A549 (cell line): ENCODE measurements at regions of chr19 and their contacts with region 1.

Region 1: GRCh38 chr19:39970675-39971379 is at the start of gene PSMC4:
- DNase-seq: peak; percentile 100
- ATAC-seq: peak; percentile 97 to 99
- H3K4me3 ChIP-seq: peak within 1 kb of the TSS; percentile 70
- H3K27ac ChIP-seq: peak within 1 kb of the TSS; percentile 91
- H3K4me1 ChIP-seq: peaks cover 18% of the 10 kb centered on the region
- CTCF ChIP-seq: peak; percentile 99
- EP300 ChIP-seq: no peak
- POLR2A ChIP-seq: peak; percentile 81
- RAD21 ChIP-seq: peak; percentile 99 to 100
- polyA plus RNA-seq, gene PSMC4: 192 and 208 TPM in 2 replicates

Region 2: GRCh38 chr19:39435499-39436349 is 535.1 kb before region 1 on chr19 and contains the start of gene RPS16:
- CTCF ChIA-PET with region 1: no interaction called
- POLR2A ChIA-PET with region 1: interaction called, 10 read pairs
- DNase-seq: peak; percentile 95 to 100
- ATAC-seq: peak; percentile 80 to 88
- H3K4me3 ChIP-seq: peak within 1 kb of the TSS; percentile 80
- H3K27ac ChIP-seq: peak within 1 kb of the TSS; percentile 90 to 95
- H3K4me1 ChIP-seq: peaks cover 71% of the 10 kb centered on the region
- CTCF ChIP-seq: no peak
- EP300 ChIP-seq: no peak
- POLR2A ChIP-seq: peak; percentile 92
- RAD21 ChIP-seq: no peak
- polyA plus RNA-seq, gene RPS16: 4,855 and 5,722 TPM in 2 replicates

Region 3: DNA sequence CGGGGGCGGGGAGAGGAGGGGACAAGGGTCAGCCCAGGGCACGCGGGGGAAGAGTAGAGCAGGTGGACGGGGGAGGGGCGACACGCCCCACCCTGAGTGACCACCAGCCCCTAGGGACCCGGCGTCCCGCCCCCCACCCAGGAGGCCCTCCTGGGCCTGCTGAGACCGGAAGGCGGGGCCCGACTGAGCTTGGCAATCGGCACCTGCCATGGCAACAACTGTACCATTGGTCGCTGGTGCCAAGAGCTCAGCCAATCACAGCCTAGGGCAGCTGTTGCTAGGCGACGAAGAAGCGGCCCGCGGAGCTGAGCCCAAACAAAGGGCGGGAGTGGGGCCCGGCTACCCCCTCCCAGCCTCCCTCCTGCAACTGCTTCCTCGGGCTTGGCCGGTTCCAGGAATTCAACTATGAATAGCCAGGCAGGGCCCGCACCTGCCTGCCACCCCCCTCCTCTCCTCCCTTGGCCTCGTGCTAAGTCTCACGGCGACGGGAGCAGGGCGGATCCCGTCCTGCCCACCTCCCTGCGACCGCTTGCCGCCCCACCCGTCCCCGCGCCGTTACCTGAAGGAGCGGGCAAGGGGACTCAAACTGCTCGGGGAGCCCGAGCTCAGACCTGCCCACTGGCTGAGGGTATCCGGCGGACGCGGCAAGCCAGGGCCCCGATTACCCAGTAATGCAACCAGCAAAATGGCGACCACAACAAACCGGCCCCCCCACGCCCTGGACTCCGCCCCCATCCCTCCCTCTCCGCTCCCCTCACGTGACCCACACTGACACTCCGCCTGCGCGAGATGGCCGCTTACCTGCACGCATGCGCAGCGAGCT is 137.2 kb before region 1 on chr19 and contains the start of gene DYRK1B:
- CTCF ChIA-PET with region 1: interaction called, 13 read pairs
- POLR2A ChIA-PET with region 1: interaction called, 31 read pairs
- DNase-seq: peak; percentile 100
- ATAC-seq: peak; percentile 90 to 95
- H3K4me3 ChIP-seq: peak within 1 kb of the TSS; percentile 73
- H3K27ac ChIP-seq: peak within 1 kb of the TSS; percentile 81 to 87
- H3K4me1 ChIP-seq: peaks cover 17% of the 10 kb centered on the region
- CTCF ChIP-seq: no peak
- EP300 ChIP-seq: no peak; a peak in 1 of 5 replicates
- POLR2A ChIP-seq: peak; percentile 40
- RAD21 ChIP-seq: no peak
- polyA plus RNA-seq, gene DYRK1B: 13.8 and 17.3 TPM in 2 replicates

Region 4: GRCh38 chr19:39889872-39890545 is 80.8 kb before region 1 on chr19:
- CTCF ChIA-PET with region 1: interaction called, 33 read pairs
- POLR2A ChIA-PET with region 1: no interaction called
- DNase-seq: no peak
- ATAC-seq: no peak
- H3K4me3 ChIP-seq: no peak overlapping the region
- H3K27ac ChIP-seq: no peak overlapping the region
- H3K4me1 ChIP-seq: peaks cover 4% of the 10 kb centered on the region
- CTCF ChIP-seq: no peak
- EP300 ChIP-seq: no peak
- POLR2A ChIP-seq: no peak
- RAD21 ChIP-seq: no peak

Region 5: GRCh38 chr19:39934584-39935363 is 36.1 kb before region 1 on chr19 and contains the start of gene FCGBP:
- CTCF ChIA-PET with region 1: interaction called, 22 read pairs
- POLR2A ChIA-PET with region 1: interaction called, 5 read pairs
- DNase-seq: no peak
- ATAC-seq: peak; percentile 12 to 15; a peak in 4 of 6 replicates
- H3K4me3 ChIP-seq: no peak within 1 kb of the TSS
- H3K27ac ChIP-seq: peak within 1 kb of the TSS; percentile 59 to 76
- H3K4me1 ChIP-seq: peaks cover 41% of the 10 kb centered on the region
- CTCF ChIP-seq: no peak
- EP300 ChIP-seq: no peak
- POLR2A ChIP-seq: no peak
- RAD21 ChIP-seq: no peak
- polyA plus RNA-seq, gene FCGBP: 1.4 and 2.8 TPM in 2 replicates

Region 6: DNA sequence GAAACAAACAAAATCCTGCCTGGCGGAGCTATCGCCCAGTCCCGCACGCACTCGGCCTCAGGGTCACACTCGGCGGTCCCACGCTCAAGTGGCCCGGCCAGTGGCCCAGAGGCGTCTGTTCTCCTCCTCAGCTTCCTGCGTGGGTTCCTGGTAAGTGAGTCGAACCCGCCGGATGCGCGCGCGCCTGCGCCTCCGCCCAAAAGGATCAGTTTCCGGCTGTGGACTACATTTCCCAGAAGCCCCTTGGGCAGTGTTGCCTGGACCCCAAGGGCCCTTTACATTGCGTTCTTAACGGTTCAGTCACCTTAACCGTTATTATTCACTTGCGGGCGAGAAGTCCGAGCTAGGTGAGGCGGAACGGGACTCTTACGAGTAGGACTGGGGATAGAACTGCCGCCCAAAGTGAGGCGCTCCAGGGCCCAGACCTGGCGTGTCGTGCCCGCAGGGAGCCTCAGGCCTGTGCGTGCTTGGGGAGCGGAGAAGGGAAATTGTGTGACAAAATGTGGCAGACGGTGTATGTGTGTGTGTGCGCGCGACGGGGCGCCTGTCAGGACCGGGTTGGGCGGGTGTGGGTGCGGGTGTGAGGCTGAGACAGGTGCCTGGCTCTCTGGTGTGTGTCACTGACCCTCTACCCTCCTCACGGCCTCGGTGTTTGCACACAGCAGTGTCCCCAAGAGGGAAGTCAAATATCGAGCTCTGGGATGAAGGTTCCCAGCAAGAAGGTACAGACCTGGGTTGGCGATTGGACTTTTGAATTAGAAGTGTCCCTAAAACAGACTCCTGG is 26.2 kb after region 1 on chr19 and contains the start of gene ZNF546:
- CTCF ChIA-PET with region 1: interaction called, 15 read pairs
- POLR2A ChIA-PET with region 1: interaction called, 24 read pairs
- DNase-seq: peak; percentile 96 to 100
- ATAC-seq: peak; percentile 96 to 98
- H3K4me3 ChIP-seq: peak within 1 kb of the TSS; percentile 74
- H3K27ac ChIP-seq: peak within 1 kb of the TSS; percentile 89 to 90
- H3K4me1 ChIP-seq: peaks cover 11% of the 10 kb centered on the region; the same call in 2 of the 3 replicates
- CTCF ChIP-seq: no peak
- EP300 ChIP-seq: peak in 1 of 2 experiments; percentile 9; a peak in 1 of 5 replicates
- POLR2A ChIP-seq: peak; percentile 99
- RAD21 ChIP-seq: peak; percentile 16 to 21; a peak in 1 of 5 replicates
- polyA plus RNA-seq, gene ZNF546: 6.0 and 6.4 TPM in 2 replicates

Region 7: GRCh38 chr19:40133491-40133890 is 162.7 kb after region 1 on chr19:
- CTCF ChIA-PET with region 1: no interaction called
- POLR2A ChIA-PET with region 1: no interaction called
- DNase-seq: no peak
- ATAC-seq: peak in 1 of 2 experiments; percentile 23; a peak in 1 of 6 replicates
- H3K4me3 ChIP-seq: no peak overlapping the region
- H3K27ac ChIP-seq: no peak overlapping the region
- H3K4me1 ChIP-seq: no peaks in the 10 kb centered on the region
- CTCF ChIP-seq: no peak
- EP300 ChIP-seq: no peak
- POLR2A ChIP-seq: no peak
- RAD21 ChIP-seq: no peak